ENCODE measurements at regions of chr4 and their contacts with region 1.

Region 1: DNA sequence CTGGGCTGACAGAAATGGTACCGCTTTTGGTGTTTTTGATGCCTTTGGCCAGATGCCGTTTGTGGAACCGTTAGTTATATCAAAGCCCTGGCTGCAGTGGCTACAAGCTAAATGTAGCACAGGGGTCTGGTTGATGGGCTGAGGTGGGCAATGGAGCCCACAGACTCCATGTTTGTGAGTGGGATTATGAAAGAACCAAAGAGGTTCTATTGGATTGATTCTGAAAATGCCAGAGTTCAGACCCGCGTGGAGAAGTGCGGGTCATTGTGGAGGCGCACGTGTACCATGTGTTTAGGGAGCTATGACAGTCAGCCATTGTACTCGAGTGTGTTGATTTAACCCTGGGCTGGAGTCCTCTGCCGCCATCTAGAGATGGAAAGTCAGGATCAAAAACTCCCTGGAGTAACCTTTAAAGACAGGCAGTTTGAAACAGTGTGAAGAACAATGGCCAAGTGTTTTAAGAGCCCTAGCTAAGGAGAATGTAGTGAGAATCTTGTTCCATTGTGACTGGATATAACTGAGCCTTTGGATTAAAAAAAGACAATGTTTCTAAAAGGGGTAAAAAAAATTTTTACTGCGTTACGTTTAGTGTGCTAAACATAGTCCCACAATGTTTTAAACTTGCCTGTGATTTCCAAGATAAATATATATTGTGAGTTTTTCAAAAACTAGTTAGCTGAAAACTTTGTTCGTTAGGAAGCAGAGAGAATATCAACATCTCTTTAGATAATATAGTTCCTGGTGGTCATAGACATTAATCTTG is 12.7 kb downstream of the ART3 start:
- DNase-seq: peak; percentile 59 to 64
- H3K4me3 ChIP-seq: peak overlapping the region in 1 of 4 experiments; percentile 34; a peak in 1 of 8 replicates
- H3K27ac ChIP-seq: no peak overlapping the region
- H3K4me1 ChIP-seq: no peaks in the 10 kb centered on the region
- H3K27me3 ChIP-seq: no peaks in the 10 kb centered on the region
- CTCF ChIP-seq: peak; percentile 22 to 80 (median 67)
- EP300 ChIP-seq: no peak
- POLR2A ChIP-seq: no peak
- RAD21 ChIP-seq: peak; percentile 88 to 90

Region 2: DNA sequence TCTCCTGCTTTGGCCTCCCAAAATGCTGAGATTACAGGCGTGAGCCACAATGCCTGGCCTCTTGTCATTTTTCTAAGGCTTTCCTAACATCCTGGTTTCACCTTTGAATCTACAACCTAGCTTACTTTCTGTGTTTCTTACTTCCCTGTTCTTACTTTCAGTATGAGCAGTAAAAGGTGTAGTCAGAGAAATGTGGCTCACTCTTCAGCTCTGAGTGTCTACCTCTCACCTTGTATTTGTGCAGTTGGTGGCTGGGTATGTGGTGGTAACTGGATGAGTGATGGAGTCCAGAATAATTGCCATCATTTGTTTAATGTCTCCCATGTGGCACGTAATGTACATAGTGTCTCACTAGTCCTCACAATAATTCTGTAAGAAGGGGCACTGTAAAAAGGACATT is 32.2 kb before region 1 on chr4:
- CTCF ChIA-PET with region 1: interaction called, 12 read pairs
- POLR2A ChIA-PET with region 1: no interaction called
- DNase-seq: no peak
- H3K4me3 ChIP-seq: no peak overlapping the region
- H3K27ac ChIP-seq: no peak overlapping the region
- H3K4me1 ChIP-seq: peaks cover 0 to 13% (median 10%) of the 10 kb centered on the region in 4 experiments; a peak in 4 of 7 replicates
- H3K27me3 ChIP-seq: no peaks in the 10 kb centered on the region
- CTCF ChIP-seq: no peak
- EP300 ChIP-seq: no peak
- POLR2A ChIP-seq: no peak
- RAD21 ChIP-seq: no peak

Region 3: GRCh38 chr4:76108467-76109181 is 21.4 kb after region 1 on chr4:
- CTCF ChIA-PET with region 1: interaction called, 27 read pairs
- POLR2A ChIA-PET with region 1: no interaction called
- DNase-seq: no peak
- H3K4me3 ChIP-seq: no peak overlapping the region
- H3K27ac ChIP-seq: no peak overlapping the region
- H3K4me1 ChIP-seq: no peaks in the 10 kb centered on the region
- H3K27me3 ChIP-seq: peaks cover 0 to 2% (median 1%) of the 10 kb centered on the region in 4 experiments; a peak in 3 of 7 replicates
- CTCF ChIP-seq: peak in 2 of 3 experiments; percentile 21 to 43; a peak in 2 of 4 replicates
- EP300 ChIP-seq: no peak
- POLR2A ChIP-seq: no peak
- RAD21 ChIP-seq: peak in 1 of 2 experiments; percentile 37; a peak in 3 of 4 replicates

Region 4: GRCh38 chr4:76233957-76234678 is 146.9 kb after region 1 on chr4:
- CTCF ChIA-PET with region 1: no interaction called
- POLR2A ChIA-PET with region 1: no interaction called
- DNase-seq: peak in 1 of 2 experiments; percentile 66
- H3K4me3 ChIP-seq: peak overlapping the region; percentile 33 to 60 (median 44)
- H3K27ac ChIP-seq: peak overlapping the region; percentile 59; the same call in 1 of the 2 replicates
- H3K4me1 ChIP-seq: peaks cover 3 to 9% (median 5%) of the 10 kb centered on the region in 4 experiments; a peak in 6 of 7 replicates
- H3K27me3 ChIP-seq: no peaks in the 10 kb centered on the region
- CTCF ChIP-seq: no peak
- EP300 ChIP-seq: no peak
- POLR2A ChIP-seq: peak in 1 of 2 experiments; percentile 48; a peak in 1 of 3 replicates
- RAD21 ChIP-seq: no peak

Measured in H1 (cell line).